ENCODE measurements at regions of chr13 and their contacts with region 1.

Region 1: GRCh38 chr13:27362064-27362883 is 62.1 kb upstream of the GTF3A start:
- DNase-seq: peak; percentile 70
- H3K4me3 ChIP-seq: peak overlapping the region in 2 of 3 experiments; percentile 12 to 29
- H3K27ac ChIP-seq: no peak overlapping the region
- H3K4me1 ChIP-seq: no peaks in the 10 kb centered on the region
- H3K27me3 ChIP-seq: peaks cover 6 to 19% of the 10 kb centered on the region in 2 experiments
- CTCF ChIP-seq: peak; percentile 93 to 99
- POLR2A ChIP-seq: no peak

Region 2: GRCh38 chr13:27203854-27204253 is 158.4 kb before region 1 on chr13:
- CTCF ChIA-PET with region 1: no interaction called
- POLR2A ChIA-PET with region 1: no interaction called
- dilution Hi-C with region 1: no loop called
- intact Hi-C with region 1: loop called (anchors 5 kb)
- DNase-seq: peak; percentile 41
- H3K4me3 ChIP-seq: no peak overlapping the region
- H3K27ac ChIP-seq: no peak overlapping the region
- H3K4me1 ChIP-seq: no peaks in the 10 kb centered on the region
- H3K27me3 ChIP-seq: peaks cover 2 to 3% of the 10 kb centered on the region in 2 experiments
- CTCF ChIP-seq: peak; percentile 3 to 25
- POLR2A ChIP-seq: no peak

Region 3: GRCh38 chr13:27339299-27339698 is 23.0 kb before region 1 on chr13:
- CTCF ChIA-PET with region 1: interaction called, 14 read pairs
- POLR2A ChIA-PET with region 1: no interaction called
- dilution Hi-C with region 1: no loop called
- intact Hi-C with region 1: no loop called
- DNase-seq: peak; percentile 58
- H3K4me3 ChIP-seq: no peak overlapping the region
- H3K27ac ChIP-seq: no peak overlapping the region
- H3K4me1 ChIP-seq: no peaks in the 10 kb centered on the region
- H3K27me3 ChIP-seq: peaks cover 3 to 6% of the 10 kb centered on the region in 2 experiments
- CTCF ChIP-seq: peak; percentile 45 to 77
- POLR2A ChIP-seq: no peak

Region 4: DNA sequence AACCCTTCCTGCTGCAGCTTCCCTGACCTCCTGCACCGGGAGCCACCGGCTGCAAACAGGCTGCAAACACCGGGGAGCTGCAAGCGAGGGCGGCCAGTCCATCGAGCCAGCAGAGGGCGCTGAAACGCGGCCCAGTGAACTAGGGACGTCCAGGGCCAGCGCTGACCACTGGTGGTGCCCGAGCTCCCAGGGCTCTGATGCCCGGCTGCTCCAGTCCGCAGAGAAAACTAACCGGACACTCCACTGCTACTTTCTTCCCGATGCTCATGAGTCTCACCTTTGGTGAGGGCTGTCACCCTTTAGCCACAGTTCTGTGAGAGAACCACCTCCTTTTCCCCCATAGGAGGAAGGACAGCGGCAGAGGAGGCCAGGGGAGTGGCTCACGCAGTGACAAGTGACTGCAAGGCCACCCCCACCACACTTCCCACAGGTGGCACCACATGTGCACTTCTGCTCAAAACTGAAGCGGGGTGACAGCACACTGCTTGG is 170.9 kb after region 1 on chr13:
- CTCF ChIA-PET with region 1: interaction called, 20 read pairs
- POLR2A ChIA-PET with region 1: no interaction called
- dilution Hi-C with region 1: no loop called
- intact Hi-C with region 1: no loop called
- DNase-seq: peak; percentile 69
- H3K4me3 ChIP-seq: no peak overlapping the region
- H3K27ac ChIP-seq: no peak overlapping the region
- H3K4me1 ChIP-seq: no peaks in the 10 kb centered on the region
- H3K27me3 ChIP-seq: no peaks in the 10 kb centered on the region
- CTCF ChIP-seq: peak; percentile 95 to 99
- POLR2A ChIP-seq: no peak

Region 5: GRCh38 chr13:27980280-27980998 is 618.2 kb after region 1 on chr13:
- CTCF ChIA-PET with region 1: interaction called, 128 read pairs
- POLR2A ChIA-PET with region 1: no interaction called
- dilution Hi-C with region 1: no loop called
- intact Hi-C with region 1: loop called (anchors 1 kb)
- DNase-seq: no peak
- H3K4me3 ChIP-seq: no peak overlapping the region
- H3K27ac ChIP-seq: no peak overlapping the region
- H3K4me1 ChIP-seq: no peaks in the 10 kb centered on the region
- H3K27me3 ChIP-seq: peaks cover 64 to 74% of the 10 kb centered on the region in 2 experiments
- CTCF ChIP-seq: no peak
- POLR2A ChIP-seq: no peak